ENCODE measurements at regions of chr9 and their contacts with region 1.

Region 1: GRCh38 chr9:13291718-13292117 is 12.2 kb upstream of the MPDZ start:
- DNase-seq: no peak

Region 2: GRCh38 chr9:13181652-13182051 is 110.1 kb before region 1 on chr9:
- intact Hi-C with region 1: no loop called
- DNase-seq: no peak

Region 3: GRCh38 chr9:13324988-13325387 is 33.3 kb after region 1 on chr9:
- intact Hi-C with region 1: loop called (anchors 5 kb)
- DNase-seq: no peak

Region 4: GRCh38 chr9:13459071-13459470 is 167.4 kb after region 1 on chr9:
- intact Hi-C with region 1: no loop called
- DNase-seq: no peak